Naive thymus-derived CD4-positive, alpha-beta T cell (primary cell): ENCODE measurements at regions of chr11 and their contacts with region 1.

Region 1: GRCh38 chr11:100930185-100930778 is 199.3 kb downstream of the PGR start:
- DNase-seq: peak in 1 of 9 donors; percentile 8
- ATAC-seq: no peak
- H3K4me3 ChIP-seq: no peak overlapping the region
- H3K4me3 Mint-ChIP-seq: no peak overlapping the region
- H3K27ac ChIP-seq: no peak overlapping the region
- H3K27ac Mint-ChIP-seq: no peak overlapping the region
- H3K4me1 ChIP-seq: no peaks in the 10 kb centered on the region
- H3K4me1 Mint-ChIP-seq: no peaks in the 10 kb centered on the region
- H3K27me3 ChIP-seq: no peaks in the 10 kb centered on the region
- H3K27me3 Mint-ChIP-seq: no peaks in the 10 kb centered on the region

Region 2: GRCh38 chr11:100383357-100383865 is 546.9 kb before region 1 on chr11:
- CTCF ChIA-PET with region 1: no interaction called
- POLR2A ChIA-PET with region 1: no interaction called
- intact Hi-C with region 1: no loop called
- DNase-seq: no peak
- ATAC-seq: no peak
- H3K4me3 ChIP-seq: no peak overlapping the region
- H3K4me3 Mint-ChIP-seq: no peak overlapping the region
- H3K27ac ChIP-seq: no peak overlapping the region
- H3K27ac Mint-ChIP-seq: no peak overlapping the region
- H3K4me1 ChIP-seq: no peaks in the 10 kb centered on the region
- H3K4me1 Mint-ChIP-seq: no peaks in the 10 kb centered on the region
- H3K27me3 ChIP-seq: no peaks in the 10 kb centered on the region
- H3K27me3 Mint-ChIP-seq: no peaks in the 10 kb centered on the region

Region 3: GRCh38 chr11:100575870-100576705 is 354.2 kb before region 1 on chr11:
- CTCF ChIA-PET with region 1: no interaction called
- POLR2A ChIA-PET with region 1: no interaction called
- intact Hi-C with region 1: loop called in 1 of 2 experiments (anchors 1 kb)
- DNase-seq: no peak
- ATAC-seq: no peak
- H3K4me3 ChIP-seq: no peak overlapping the region
- H3K4me3 Mint-ChIP-seq: no peak overlapping the region
- H3K27ac ChIP-seq: no peak overlapping the region
- H3K27ac Mint-ChIP-seq: no peak overlapping the region
- H3K4me1 ChIP-seq: no peaks in the 10 kb centered on the region
- H3K4me1 Mint-ChIP-seq: no peaks in the 10 kb centered on the region
- H3K27me3 ChIP-seq: no peaks in the 10 kb centered on the region
- H3K27me3 Mint-ChIP-seq: peaks cover 0 to 5% (median 0%) of the 10 kb centered on the region in 5 donors

Region 4: GRCh38 chr11:100681064-100681502 is 249.2 kb before region 1 on chr11:
- CTCF ChIA-PET with region 1: no interaction called
- POLR2A ChIA-PET with region 1: no interaction called
- intact Hi-C with region 1: loop called in 1 of 2 experiments (anchors 5 kb)
- DNase-seq: peak in 2 of 9 donors; percentile 1 to 8
- ATAC-seq: peak; percentile 80
- H3K4me3 ChIP-seq: no peak overlapping the region
- H3K4me3 Mint-ChIP-seq: peak overlapping the region in 3 of 10 donors; percentile 15 to 28 (median 26)
- H3K27ac ChIP-seq: no peak overlapping the region
- H3K27ac Mint-ChIP-seq: peak overlapping the region in 2 of 9 donors; percentile 9 to 24
- H3K4me1 ChIP-seq: peaks cover 0 to 4% of the 10 kb centered on the region in 2 donors
- H3K4me1 Mint-ChIP-seq: peaks cover 0 to 13% (median 5%) of the 10 kb centered on the region in 7 donors
- H3K27me3 ChIP-seq: no peaks in the 10 kb centered on the region
- H3K27me3 Mint-ChIP-seq: peaks cover 2 to 14% (median 9%) of the 10 kb centered on the region in 5 donors

Region 5: DNA sequence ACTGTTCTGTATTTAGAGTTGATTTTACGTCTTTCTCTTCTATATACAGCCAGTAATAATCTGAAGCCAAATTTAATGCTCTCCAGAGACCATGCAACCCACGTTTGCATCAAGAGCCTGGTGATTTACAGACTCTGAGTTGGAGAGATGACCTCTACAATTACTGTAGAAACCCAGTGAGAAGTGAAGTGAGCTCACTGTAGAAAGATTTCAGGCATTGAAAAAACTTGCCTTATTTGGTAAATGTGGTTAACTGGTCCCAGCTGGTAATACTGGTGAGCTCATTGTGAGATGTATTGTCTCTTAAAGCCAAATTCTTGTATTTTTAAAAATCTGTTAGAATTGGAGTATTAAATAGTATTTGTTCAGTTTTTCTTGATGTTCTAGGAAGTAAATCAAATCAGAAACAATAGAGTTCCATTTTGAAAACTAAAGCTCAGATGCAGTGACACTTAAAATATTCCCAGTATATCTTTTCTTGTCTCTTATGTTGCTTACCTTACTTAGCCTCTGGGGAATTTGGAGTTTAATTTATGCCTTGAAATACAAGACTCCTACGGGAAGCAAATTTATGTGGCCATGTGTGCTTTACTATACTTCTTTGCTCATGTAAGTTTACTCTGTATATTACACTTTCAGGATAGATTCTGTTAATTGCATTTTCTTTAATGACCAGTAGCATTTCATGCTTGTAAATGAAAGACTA is 53.3 kb before region 1 on chr11:
- CTCF ChIA-PET with region 1: no interaction called
- POLR2A ChIA-PET with region 1: no interaction called
- intact Hi-C with region 1: no loop called
- DNase-seq: no peak
- ATAC-seq: no peak
- H3K4me3 ChIP-seq: no peak overlapping the region
- H3K4me3 Mint-ChIP-seq: no peak overlapping the region
- H3K27ac ChIP-seq: no peak overlapping the region
- H3K27ac Mint-ChIP-seq: no peak overlapping the region
- H3K4me1 ChIP-seq: no peaks in the 10 kb centered on the region
- H3K4me1 Mint-ChIP-seq: peaks cover 0 to 1% (median 0%) of the 10 kb centered on the region in 7 donors
- H3K27me3 ChIP-seq: no peaks in the 10 kb centered on the region
- H3K27me3 Mint-ChIP-seq: no peaks in the 10 kb centered on the region